Activated CD4-positive, alpha-beta T cell treated with anti-CD3 and anti-CD28 coated beads for 36 hours (primary cell): ENCODE measurements at regions of chr7 and their contacts with region 1.

Region 1: GRCh38 chr7:6221340-6222319 is 50.8 kb downstream of the CYTH3 start:
- DNase-seq: peak; percentile 63
- ATAC-seq: peak; percentile 97
- H3K4me3 Mint-ChIP-seq: peak overlapping the region; percentile 9
- H3K27ac Mint-ChIP-seq: peak overlapping the region; percentile 67
- H3K4me1 Mint-ChIP-seq: peaks cover 18% of the 10 kb centered on the region
- H3K27me3 Mint-ChIP-seq: peaks cover 15% of the 10 kb centered on the region

Region 2: GRCh38 chr7:6250364-6250833 is 28.8 kb after region 1 on chr7:
- CTCF ChIA-PET with region 1: no interaction called
- POLR2A ChIA-PET with region 1: interaction called, 3 read pairs
- intact Hi-C with region 1: loop called (anchors 1 kb)
- DNase-seq: peak; percentile 62
- ATAC-seq: peak; percentile 95
- H3K4me3 Mint-ChIP-seq: no peak overlapping the region
- H3K27ac Mint-ChIP-seq: no peak overlapping the region
- H3K4me1 Mint-ChIP-seq: peaks cover 27% of the 10 kb centered on the region
- H3K27me3 Mint-ChIP-seq: peaks cover 10% of the 10 kb centered on the region

Region 3: DNA sequence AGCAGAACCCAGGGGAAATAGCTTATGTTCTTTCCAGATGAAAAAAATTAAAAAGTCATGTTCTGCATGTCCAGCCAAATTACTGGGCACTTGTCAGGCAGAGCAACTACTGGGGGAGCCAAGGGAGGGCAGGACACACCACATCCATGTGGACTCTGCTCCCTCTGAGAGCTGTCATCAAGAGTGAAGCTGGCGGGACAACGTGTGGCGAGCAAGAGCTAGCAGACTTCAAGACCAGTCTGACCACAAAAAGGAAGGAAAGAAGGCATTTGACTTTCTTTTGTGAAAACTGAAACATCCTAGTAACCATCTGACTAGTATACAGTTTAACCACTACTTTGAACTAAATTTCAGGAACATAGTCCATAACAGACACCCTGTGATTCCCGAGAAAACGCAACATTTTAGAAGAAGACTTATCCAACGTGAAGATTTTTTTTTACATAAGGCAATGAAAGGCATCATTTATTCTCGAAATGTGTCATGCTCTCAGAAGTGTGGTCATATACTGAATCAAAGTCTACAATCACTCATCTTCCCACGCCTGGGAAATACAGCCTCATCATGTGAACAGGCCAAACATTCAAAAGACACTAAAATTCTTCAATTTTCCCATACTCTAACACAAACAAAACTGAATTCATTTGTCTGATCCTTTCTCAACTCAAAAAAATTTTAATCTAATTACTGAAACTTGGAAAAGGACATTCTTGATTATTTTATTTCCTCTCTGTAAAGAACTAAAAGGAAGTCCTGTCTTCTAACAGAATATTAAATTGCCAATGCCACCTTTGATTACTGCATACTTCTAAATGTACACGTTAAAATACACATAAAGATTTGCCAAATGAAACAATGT is 35.3 kb after region 1 on chr7:
- CTCF ChIA-PET with region 1: interaction called, 5 read pairs
- POLR2A ChIA-PET with region 1: no interaction called
- intact Hi-C with region 1: loop called (anchors 1 kb)
- DNase-seq: peak; percentile 79
- ATAC-seq: peak; percentile 90
- H3K4me3 Mint-ChIP-seq: no peak overlapping the region
- H3K27ac Mint-ChIP-seq: no peak overlapping the region
- H3K4me1 Mint-ChIP-seq: peaks cover 38% of the 10 kb centered on the region
- H3K27me3 Mint-ChIP-seq: peaks cover 13% of the 10 kb centered on the region

Region 4: GRCh38 chr7:7577888-7578287 is 1356.3 kb after region 1 on chr7:
- CTCF ChIA-PET with region 1: no interaction called
- POLR2A ChIA-PET with region 1: no interaction called
- intact Hi-C with region 1: no loop called
- DNase-seq: no peak
- ATAC-seq: no peak
- H3K4me3 Mint-ChIP-seq: no peak overlapping the region
- H3K27ac Mint-ChIP-seq: no peak overlapping the region
- H3K4me1 Mint-ChIP-seq: peaks cover 11% of the 10 kb centered on the region
- H3K27me3 Mint-ChIP-seq: no peaks in the 10 kb centered on the region